MCF 10A (cell line): ENCODE measurements at regions of chr5 and their contacts with region 1.

Region 1: GRCh38 chr5:176447982-176448608 is at the start of gene FAF2:
- DNase-seq: peak; percentile 100
- H3K4me3 Mint-ChIP-seq: peak within 1 kb of the TSS; percentile 92
- H3K27ac Mint-ChIP-seq: peak within 1 kb of the TSS; percentile 100
- H3K4me1 Mint-ChIP-seq: peaks cover 24% of the 10 kb centered on the region
- H3K27me3 Mint-ChIP-seq: no peaks in the 10 kb centered on the region
- CTCF ChIP-seq: peak; percentile 99
- total RNA-seq, gene FAF2: 78.3 and 97.2 TPM in 2 replicates

Region 2: DNA sequence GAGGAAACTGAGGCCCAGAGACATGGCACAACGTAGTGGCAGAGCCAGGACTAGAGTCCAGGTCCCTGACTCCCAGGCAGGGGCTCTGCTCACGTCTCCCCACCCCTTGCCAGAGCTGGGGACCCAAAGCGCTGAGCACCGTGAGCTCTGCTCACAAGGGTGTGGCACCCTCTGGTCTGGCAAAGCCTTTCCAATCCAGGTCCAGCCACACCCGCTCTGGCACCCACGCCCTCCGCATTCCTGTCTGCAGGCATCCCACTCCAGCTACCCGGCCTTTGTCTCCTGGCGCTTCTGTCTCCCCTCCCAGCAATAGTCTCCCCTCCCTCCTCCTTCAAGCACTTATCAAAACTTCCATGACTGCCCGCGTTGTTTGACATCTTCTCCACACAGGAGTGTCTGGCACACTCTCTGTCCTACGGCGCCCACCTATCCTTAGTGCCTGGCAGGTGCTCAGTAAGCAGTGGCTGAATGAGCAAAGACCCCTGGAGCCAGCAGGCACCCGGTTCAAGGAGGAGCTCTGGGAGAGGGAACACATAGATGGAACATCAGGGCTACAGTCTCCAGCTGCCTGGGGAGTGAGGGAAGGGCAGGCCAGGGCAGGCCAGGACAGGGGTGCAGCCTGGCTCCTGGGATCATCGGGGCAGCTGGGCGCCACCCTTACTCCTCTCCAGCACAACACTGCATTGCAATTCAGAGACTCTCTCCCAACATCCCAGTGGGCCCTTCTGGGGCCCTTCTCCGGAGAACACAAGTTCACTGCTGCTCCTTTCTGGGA is 47.5 kb before region 1 on chr5:
- CTCF ChIA-PET with region 1: interaction called, 7 read pairs
- POLR2A ChIA-PET with region 1: interaction called, 17 read pairs
- intact Hi-C with region 1: no loop called
- DNase-seq: peak; percentile 48
- H3K4me3 Mint-ChIP-seq: peak overlapping the region; percentile 38
- H3K27ac Mint-ChIP-seq: peak overlapping the region; percentile 78
- H3K4me1 Mint-ChIP-seq: peaks cover 29% of the 10 kb centered on the region
- H3K27me3 Mint-ChIP-seq: no peaks in the 10 kb centered on the region
- CTCF ChIP-seq: no peak

Region 3: GRCh38 chr5:176429972-176430371 is 18.1 kb before region 1 on chr5:
- CTCF ChIA-PET with region 1: interaction called, 7 read pairs
- POLR2A ChIA-PET with region 1: interaction called, 16 read pairs
- intact Hi-C with region 1: no loop called
- DNase-seq: no peak
- H3K4me3 Mint-ChIP-seq: no peak overlapping the region
- H3K27ac Mint-ChIP-seq: no peak overlapping the region
- H3K4me1 Mint-ChIP-seq: peaks cover 11% of the 10 kb centered on the region
- H3K27me3 Mint-ChIP-seq: no peaks in the 10 kb centered on the region
- CTCF ChIP-seq: no peak

Region 4: GRCh38 chr5:176466245-176466871 is 18.3 kb after region 1 on chr5:
- CTCF ChIA-PET with region 1: interaction called, 12 read pairs
- POLR2A ChIA-PET with region 1: interaction called, 149 read pairs
- intact Hi-C with region 1: no loop called
- DNase-seq: peak; percentile 84
- H3K4me3 Mint-ChIP-seq: peak overlapping the region; percentile 11
- H3K27ac Mint-ChIP-seq: peak overlapping the region; percentile 24
- H3K4me1 Mint-ChIP-seq: peaks cover 35% of the 10 kb centered on the region
- H3K27me3 Mint-ChIP-seq: no peaks in the 10 kb centered on the region
- CTCF ChIP-seq: no peak

Region 5: GRCh38 chr5:176537608-176538504 is 89.8 kb after region 1 on chr5:
- CTCF ChIA-PET with region 1: interaction called, 39 read pairs
- POLR2A ChIA-PET with region 1: interaction called, 128 read pairs
- intact Hi-C with region 1: loop called (anchors 1 kb)
- DNase-seq: peak; percentile 100
- H3K4me3 Mint-ChIP-seq: peak overlapping the region; percentile 91
- H3K27ac Mint-ChIP-seq: peak overlapping the region; percentile 98
- H3K4me1 Mint-ChIP-seq: peaks cover 56% of the 10 kb centered on the region
- H3K27me3 Mint-ChIP-seq: no peaks in the 10 kb centered on the region
- CTCF ChIP-seq: no peak